ENCODE measurements at regions of chr17 and their contacts with region 1.

Region 1: DNA sequence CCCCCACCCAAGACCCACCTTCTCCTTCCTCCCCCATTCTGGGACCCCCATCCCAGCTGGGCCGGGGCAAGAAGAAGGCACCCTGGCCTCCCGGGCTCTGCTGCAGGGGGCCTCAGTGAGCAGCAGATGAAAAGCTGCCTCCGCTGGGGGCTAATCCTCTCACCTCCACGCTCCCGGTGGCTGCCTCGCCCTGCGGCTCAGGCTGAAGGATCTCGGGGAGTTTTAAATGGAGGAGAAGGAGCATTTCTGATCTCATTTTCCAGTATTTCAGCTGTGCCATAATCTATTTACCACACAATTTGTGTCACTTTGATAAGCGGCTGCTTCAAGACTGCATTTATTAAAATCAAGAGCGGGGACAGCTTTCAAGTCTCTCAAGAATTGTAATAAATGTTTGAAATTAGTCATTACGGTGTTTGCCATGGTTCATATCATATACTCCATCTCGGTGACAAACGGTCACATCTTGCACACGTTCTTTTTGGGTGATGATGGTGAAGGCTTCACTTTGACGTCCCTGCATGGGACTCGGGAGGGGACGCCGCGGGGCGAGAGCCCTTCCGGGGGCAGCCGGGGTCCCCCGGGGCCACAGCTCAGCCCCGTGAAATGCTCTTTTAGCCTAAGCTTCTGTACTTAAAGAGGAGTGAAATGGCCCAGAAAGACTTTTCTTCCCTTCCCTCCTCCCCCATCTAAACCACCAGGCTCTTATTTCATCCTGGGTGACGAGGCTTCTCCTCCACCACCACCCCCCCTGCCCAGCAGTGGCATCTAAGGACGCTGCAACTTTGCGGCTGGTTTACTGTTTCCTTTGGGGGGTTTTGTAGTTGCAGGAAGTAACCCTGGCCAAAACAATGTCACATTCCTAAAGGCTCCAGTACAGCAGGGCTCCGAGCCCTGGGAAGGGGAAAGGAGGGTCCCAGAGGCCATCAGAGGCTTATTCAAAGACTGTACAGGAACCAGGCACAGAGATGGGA is 313.1 kb upstream of the TNRC6C start:
- DNase-seq: peak; percentile 84
- H3K4me3 Mint-ChIP-seq: peak overlapping the region; percentile 72
- H3K27ac Mint-ChIP-seq: peak overlapping the region; percentile 95
- H3K4me1 Mint-ChIP-seq: peaks cover 28% of the 10 kb centered on the region
- H3K27me3 Mint-ChIP-seq: peaks cover 8% of the 10 kb centered on the region

Region 2: GRCh38 chr17:77349976-77350830 is 295.2 kb before region 1 on chr17:
- intact Hi-C with region 1: loop called (anchors 10 kb)
- DNase-seq: no peak
- H3K4me3 Mint-ChIP-seq: no peak overlapping the region
- H3K27ac Mint-ChIP-seq: peak overlapping the region; percentile 29
- H3K4me1 Mint-ChIP-seq: peaks cover 32% of the 10 kb centered on the region
- H3K27me3 Mint-ChIP-seq: no peaks in the 10 kb centered on the region

Region 3: DNA sequence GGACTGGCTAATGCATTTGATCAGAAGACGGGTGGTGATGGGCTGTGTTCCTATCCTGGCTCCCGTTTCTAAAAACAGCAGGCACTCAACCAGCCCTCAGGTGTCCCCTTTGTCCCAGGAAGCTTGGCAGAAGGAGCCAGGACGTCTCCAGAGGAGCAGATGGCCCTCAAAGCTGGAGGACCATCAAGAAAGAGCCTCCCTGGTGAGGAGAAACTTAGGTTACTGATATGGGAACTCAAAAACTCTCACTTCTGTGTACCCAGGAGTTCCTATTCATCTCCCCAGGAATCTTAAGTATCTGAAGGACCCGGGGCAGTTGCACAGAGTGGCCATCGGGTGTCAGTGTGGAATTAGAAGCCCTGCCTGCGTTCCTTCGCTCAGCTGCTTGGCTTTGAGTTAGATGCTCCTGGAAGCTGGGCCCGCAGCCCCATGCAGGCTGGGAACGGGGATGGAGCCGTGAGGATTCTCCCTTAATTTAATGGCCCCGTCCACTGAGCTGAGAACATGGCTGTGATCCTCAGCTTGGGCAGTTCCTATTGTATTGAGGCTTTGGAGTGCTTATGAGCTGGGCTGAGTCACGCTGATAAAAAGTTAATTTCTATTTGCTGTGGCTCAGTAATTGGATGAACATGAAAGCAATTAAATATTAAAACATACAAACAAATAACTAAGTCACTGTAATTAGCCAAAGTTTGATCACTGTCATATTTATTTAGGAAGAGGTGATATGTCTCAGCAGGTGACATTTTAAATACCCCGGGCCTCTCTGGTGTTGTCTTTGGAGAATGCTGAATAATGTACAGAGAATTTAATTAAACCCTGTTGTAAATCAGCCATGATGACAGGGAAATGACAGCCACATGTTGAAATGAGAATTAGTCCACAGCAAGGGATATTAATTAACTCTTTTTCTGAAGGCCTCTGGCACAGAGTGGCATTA is 102.5 kb before region 1 on chr17:
- intact Hi-C with region 1: loop called (anchors 5 kb)
- DNase-seq: peak; percentile 88
- H3K4me3 Mint-ChIP-seq: no peak overlapping the region
- H3K27ac Mint-ChIP-seq: no peak overlapping the region
- H3K4me1 Mint-ChIP-seq: peaks cover 3% of the 10 kb centered on the region
- H3K27me3 Mint-ChIP-seq: peaks cover 24% of the 10 kb centered on the region

Region 4: DNA sequence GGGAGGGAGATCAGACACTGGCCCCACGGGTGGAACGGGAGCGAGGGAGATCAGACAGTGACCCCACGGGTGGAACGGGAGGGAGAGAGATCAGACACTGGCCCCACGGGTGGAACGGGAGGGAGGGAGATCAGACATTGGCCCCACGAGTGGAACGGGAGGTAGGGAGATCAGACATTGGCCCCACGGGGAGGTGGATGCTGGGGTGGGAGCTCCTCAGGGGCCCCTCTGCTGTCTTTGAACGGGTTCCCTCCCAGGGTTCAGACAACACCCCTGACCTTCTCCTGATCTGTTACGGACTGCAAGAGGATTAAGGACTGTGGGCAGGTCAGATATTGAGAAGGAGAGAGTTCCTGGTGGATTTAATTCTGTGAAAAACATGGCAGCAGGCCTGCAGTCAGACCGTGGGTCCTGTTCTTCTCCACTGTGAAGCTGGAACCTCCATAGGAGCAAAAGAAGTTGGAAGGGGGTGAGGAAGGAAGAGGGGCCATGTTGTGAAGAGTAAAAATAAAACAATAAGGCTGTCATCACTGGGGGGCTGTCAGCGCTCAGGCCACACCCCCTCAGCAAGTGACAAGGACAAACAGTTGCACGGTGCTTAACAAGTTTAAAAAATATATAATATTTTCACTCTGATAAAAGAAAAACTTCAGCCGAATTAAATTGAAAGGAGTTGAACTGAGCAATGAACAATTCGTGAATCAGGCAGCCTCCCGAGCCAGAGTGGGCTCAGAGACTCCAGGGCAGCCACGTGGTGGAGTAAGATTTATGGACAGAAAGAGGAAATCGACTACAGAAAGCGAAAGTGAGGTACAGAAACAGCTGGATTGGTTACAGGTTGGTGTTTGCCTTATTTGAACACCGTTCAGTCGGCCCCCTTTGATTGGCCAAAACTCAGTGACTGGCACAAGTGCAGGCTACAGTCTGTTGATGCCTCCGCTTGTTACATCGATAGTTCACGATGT is 35.5 kb before region 1 on chr17:
- intact Hi-C with region 1: loop called (anchors 1 kb)
- DNase-seq: peak; percentile 91
- H3K4me3 Mint-ChIP-seq: peak overlapping the region; percentile 73
- H3K27ac Mint-ChIP-seq: peak overlapping the region; percentile 90
- H3K4me1 Mint-ChIP-seq: peaks cover 21% of the 10 kb centered on the region
- H3K27me3 Mint-ChIP-seq: peaks cover 12% of the 10 kb centered on the region

Region 5: GRCh38 chr17:77634710-77635109 is 10.6 kb before region 1 on chr17:
- intact Hi-C with region 1: loop called (anchors 1 kb)
- DNase-seq: peak; percentile 82
- H3K4me3 Mint-ChIP-seq: no peak overlapping the region
- H3K27ac Mint-ChIP-seq: peak overlapping the region; percentile 74
- H3K4me1 Mint-ChIP-seq: peaks cover 15% of the 10 kb centered on the region
- H3K27me3 Mint-ChIP-seq: peaks cover 4% of the 10 kb centered on the region

Region 6: GRCh38 chr17:77666881-77667395 is 21.6 kb after region 1 on chr17:
- intact Hi-C with region 1: loop called (anchors 1 kb)
- DNase-seq: peak; percentile 95
- H3K4me3 Mint-ChIP-seq: peak overlapping the region; percentile 88
- H3K27ac Mint-ChIP-seq: peak overlapping the region; percentile 97
- H3K4me1 Mint-ChIP-seq: peaks cover 34% of the 10 kb centered on the region
- H3K27me3 Mint-ChIP-seq: no peaks in the 10 kb centered on the region